ENCODE measurements at regions of chr20 and their contacts with region 1.

Region 1: GRCh38 chr20:2206957-2207769 is 88.6 kb upstream of the TGM3 start:
- DNase-seq: peak; percentile 90

Region 2: DNA sequence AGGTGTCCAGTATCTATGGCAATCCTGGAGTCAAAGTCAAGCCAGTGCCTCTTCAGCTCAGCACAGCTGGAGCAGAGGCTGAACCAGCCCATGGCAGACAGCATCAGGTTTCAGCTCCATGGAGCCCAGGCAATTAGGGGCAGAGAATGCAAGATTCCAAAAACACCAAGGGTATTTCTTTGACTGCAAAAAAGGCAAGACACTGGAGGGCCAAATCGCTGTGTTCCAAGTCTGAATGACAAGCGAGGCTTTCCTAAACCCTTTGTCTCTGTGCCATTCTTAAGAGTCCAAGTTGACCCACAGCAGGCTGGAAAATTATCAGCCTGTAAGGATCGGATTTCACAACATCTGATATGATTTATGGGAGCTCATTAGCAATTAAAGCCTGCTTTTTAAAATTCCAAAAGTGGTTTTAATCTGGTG is 38.9 kb after region 1 on chr20:
- intact Hi-C with region 1: no loop called
- DNase-seq: no peak

Region 3: GRCh38 chr20:2349818-2350508 is 142.8 kb after region 1 on chr20:
- intact Hi-C with region 1: loop called (anchors 10 kb)
- DNase-seq: no peak

Region 4: DNA sequence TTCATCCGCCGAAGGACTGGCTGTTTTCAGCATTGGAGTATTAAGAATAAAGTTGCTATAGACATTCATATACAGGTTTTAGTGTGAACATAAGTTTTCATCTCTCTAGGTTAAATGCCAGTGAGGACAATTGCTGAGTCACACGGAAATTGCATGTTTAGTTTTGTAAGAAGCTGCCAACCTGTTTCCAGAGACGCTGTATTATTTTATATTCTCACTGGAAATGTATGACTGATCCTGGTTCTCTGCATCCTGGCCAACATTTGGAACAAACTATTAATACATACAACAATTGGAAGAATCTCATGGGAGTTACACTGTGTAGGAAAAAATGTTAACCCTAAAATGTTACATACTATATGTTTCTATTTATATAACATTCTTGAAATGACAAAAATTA is 156.9 kb after region 1 on chr20:
- intact Hi-C with region 1: no loop called
- DNase-seq: no peak

Region 5: DNA sequence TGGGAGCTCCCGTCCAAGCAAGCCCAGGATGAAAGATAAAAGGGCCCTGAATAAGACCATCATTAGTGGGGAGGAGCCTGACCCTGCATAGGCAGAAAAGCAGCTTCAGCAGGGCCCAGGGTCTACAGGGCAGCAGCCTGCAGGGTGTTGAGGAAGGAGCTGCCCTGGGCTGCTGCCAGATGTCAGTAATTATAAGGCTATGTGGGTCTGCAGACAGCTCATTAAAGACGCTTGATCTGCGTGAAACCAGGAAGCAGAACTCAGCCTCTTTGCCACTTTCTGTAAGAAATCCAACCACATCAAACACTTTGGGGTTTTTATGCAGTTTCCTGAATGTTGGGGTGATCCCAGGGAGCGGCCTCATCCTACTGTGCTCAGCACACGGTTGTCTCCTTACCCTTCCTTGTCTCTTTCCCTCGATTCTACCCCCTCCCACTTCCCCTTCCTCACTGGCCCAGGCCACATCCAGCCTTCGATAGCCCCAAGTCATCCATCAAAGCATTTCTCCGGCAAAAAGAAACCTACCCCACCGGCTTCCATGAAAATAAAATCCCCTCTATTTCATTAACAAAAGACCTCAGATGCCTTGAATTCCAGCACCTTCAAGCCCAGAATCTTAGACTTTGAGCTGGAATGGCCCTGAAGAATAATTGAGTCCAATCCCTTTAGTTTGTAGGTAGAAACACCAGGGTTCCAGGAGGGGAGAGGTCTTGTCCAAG is 172.5 kb after region 1 on chr20:
- intact Hi-C with region 1: no loop called
- DNase-seq: no peak

Region 6: DNA sequence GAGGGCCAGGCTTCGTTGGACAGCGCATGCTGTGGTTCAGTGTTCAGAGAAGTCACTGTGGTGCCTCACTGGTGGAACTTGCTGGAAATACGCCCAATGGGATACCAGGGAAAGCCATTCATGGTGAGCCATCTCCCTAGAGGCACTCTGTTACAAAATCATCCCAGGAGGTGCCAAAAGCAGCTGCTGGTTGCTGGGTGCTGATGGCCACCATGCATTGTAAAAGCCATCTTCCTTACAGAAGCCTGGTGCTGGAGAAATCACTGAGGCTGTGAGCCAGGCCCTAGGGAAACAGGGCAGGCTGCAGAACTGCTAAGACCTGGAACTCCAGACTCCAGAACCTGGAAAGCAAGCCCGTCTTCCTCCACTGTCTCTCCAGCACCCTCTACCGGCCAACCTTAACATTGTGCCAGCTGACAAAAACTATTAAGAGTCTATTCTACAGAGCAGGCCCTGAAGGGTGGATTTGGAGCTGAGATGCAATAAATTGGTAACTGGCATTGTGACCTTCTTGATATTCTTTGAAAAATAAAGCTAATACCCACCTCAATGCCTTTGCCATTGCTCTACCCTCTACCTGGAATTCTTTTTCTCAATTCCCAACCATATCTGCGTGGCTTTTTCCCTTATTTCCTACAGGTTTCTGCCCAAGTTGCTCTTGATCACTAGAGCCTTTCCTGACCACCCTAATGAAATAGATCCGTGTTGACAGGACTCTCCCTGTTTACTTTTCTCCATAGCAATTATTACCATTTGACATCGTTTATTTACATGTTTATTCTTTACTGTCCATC is 245.0 kb after region 1 on chr20:
- intact Hi-C with region 1: loop called (anchors 5 kb)
- DNase-seq: peak; percentile 80

Measured in cardiac septum (tissue), 1 donor.